ENCODE measurements at regions of chrX and their contacts with region 1.

Region 1: DNA sequence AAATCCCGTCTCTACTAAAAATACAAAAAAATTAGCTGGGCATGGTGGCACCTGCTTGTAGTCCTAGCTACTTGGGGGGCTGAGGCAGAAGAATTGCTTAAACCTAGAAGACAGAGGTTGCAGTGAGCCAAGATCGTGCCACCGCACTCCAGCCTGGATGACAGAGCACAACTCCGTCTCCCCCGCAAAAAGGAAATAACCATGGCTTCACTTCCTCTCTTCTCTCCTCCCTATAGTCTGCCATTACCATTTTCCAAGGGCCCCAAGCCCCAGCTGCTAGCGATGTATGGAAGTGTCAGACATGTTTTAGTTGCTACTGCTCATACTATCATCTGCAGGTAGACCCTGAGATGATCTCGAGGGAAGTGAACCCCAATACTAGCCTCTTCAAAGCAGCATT is 177.3 kb upstream of the FAM9B start:
- DNase-seq: no peak
- H3K4me3 ChIP-seq: no peak overlapping the region
- H3K27ac ChIP-seq: no peak overlapping the region
- H3K4me1 ChIP-seq: no peaks in the 10 kb centered on the region
- H3K27me3 ChIP-seq: no peaks in the 10 kb centered on the region
- CTCF ChIP-seq: no peak

Region 2: GRCh38 chrX:9221781-9222180 is 10.5 kb after region 1 on chrX:
- CTCF ChIA-PET with region 1: no interaction called
- POLR2A ChIA-PET with region 1: interaction called, 13 read pairs
- intact Hi-C with region 1: no loop called
- DNase-seq: no peak
- H3K4me3 ChIP-seq: no peak overlapping the region
- H3K27ac ChIP-seq: no peak overlapping the region
- H3K4me1 ChIP-seq: no peaks in the 10 kb centered on the region
- H3K27me3 ChIP-seq: no peaks in the 10 kb centered on the region
- CTCF ChIP-seq: no peak